Heart right ventricle (tissue), 16 donors: ENCODE measurements at regions of chrX and their contacts with region 1.

Region 1: DNA sequence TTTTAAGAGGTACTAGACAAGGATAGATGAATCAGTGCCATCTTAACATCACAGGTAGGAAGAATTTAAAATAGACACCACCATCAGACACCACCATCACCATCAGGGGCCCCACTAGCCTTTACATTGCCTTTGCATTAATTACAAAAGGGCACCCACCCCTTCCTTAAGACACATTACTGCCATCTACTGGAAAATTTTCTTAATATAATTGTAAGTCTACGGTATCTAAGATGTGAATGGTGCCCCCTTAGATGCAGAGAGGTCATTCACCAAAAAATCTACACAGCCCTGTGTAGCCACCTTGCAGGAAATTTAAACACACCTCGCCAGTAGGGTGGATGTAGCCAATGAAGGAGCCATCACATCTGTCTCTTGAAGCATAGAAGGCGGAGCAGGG is 184.1 kb downstream of the MID1IP1 start:
- DNase-seq: no peak
- ATAC-seq: peak in 1 of 8 donors; percentile 20
- H3K4me3 ChIP-seq: no peak overlapping the region
- H3K27ac ChIP-seq: no peak overlapping the region
- H3K4me1 ChIP-seq: peaks cover 0 to 6% (median 0%) of the 10 kb centered on the region in 9 donors
- H3K27me3 ChIP-seq: peaks cover 0 to 11% (median 0%) of the 10 kb centered on the region in 7 donors
- CTCF ChIP-seq: peak in 8 of 9 donors; percentile 6 to 50 (median 33)

Region 2: DNA sequence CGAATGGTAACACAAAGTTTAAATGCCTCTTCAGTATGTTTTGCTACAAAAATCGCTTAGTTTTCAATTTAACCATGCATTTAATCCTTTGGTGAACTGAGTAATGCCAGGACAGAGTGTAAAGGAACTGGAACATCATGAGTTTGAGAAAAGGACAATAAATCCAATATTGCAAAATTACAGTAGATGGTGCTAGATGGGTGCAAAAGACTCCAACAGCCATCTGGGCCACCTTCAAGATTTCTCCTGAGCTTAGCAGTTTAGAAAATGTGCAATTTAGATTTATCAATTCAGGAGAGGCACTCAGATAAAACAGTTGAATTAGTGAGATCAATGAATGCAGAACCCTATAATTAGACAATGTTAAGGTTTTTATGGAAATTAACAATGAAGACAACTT is 217.3 kb before region 1 on chrX:
- intact Hi-C with region 1: loop called in 6 of 10 experiments (anchors 2 to 10 kb)
- DNase-seq: no peak
- ATAC-seq: peak in 1 of 8 donors; percentile 51
- H3K4me3 ChIP-seq: no peak overlapping the region
- H3K27ac ChIP-seq: no peak overlapping the region
- H3K4me1 ChIP-seq: no peaks in the 10 kb centered on the region
- H3K27me3 ChIP-seq: peaks cover 0 to 32% (median 0%) of the 10 kb centered on the region in 7 donors
- CTCF ChIP-seq: peak in 8 of 9 donors; percentile 15 to 59 (median 44)

Region 3: GRCh38 chrX:38774249-38774648 is 211.1 kb before region 1 on chrX:
- intact Hi-C with region 1: loop called in 5 of 10 experiments (anchors 5 to 10 kb)
- DNase-seq: no peak
- ATAC-seq: no peak
- H3K4me3 ChIP-seq: no peak overlapping the region
- H3K27ac ChIP-seq: no peak overlapping the region
- H3K4me1 ChIP-seq: no peaks in the 10 kb centered on the region
- H3K27me3 ChIP-seq: peaks cover 0 to 40% (median 0%) of the 10 kb centered on the region in 7 donors
- CTCF ChIP-seq: no peak

Region 4: DNA sequence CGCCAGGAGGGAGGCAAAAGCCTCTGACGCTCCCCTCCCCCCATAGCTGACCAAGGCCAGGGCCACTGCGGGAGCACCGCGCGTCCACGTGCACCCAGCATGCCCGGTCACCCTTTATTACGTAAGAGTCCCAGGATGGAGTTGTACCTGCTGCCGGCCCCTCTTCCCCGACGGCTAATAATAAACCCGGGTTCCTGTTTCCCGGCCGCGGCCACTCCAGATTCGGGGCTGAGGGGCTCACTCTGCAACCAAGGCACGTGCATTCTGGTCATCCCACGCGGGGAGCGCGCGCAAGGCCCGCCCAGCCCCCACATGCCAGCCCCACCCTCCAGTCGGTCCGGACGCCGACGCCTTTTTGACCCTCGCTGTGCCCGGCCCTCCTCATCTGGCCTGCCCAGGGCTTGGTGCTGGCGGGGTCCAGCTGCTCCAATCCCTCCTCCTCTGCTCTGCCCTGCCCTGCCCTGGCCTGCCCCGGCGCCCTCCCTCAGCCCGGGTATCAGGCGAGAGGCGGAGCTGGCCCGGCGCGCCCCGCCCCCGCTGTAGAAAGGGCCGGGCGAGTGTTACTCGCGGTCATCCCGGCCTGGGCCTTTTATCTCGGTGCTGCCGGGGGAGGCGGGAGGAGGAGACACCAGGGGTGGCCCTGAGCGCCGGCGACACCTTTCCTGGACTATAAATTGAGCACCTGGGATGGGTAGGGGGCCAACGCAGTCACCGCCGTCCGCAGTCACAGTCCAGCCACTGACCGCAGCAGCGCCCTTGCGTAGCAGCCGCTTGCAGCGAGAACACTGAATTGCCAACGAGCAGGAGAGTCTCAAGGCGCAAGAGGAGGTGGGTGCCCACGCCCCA is 181.6 kb before region 1 on chrX:
- intact Hi-C with region 1: loop called in 7 of 10 experiments (anchors 5 to 10 kb)
- DNase-seq: peak; percentile 77 to 86
- ATAC-seq: peak; percentile 81 to 94 (median 84)
- H3K4me3 ChIP-seq: peak overlapping the region; percentile 63 to 77 (median 70)
- H3K27ac ChIP-seq: peak overlapping the region; percentile 89 to 96 (median 95)
- H3K4me1 ChIP-seq: peaks cover 0 to 47% (median 26%) of the 10 kb centered on the region in 9 donors
- H3K27me3 ChIP-seq: no peaks in the 10 kb centered on the region
- CTCF ChIP-seq: no peak

Region 5: GRCh38 chrX:38929966-38930421 is 55.4 kb before region 1 on chrX:
- intact Hi-C with region 1: no loop called
- DNase-seq: no peak
- ATAC-seq: peak in 6 of 8 donors; percentile 20 to 86 (median 50)
- H3K4me3 ChIP-seq: no peak overlapping the region
- H3K27ac ChIP-seq: peak overlapping the region in 1 of 10 donors; percentile 20
- H3K4me1 ChIP-seq: peaks cover 0 to 3% (median 0%) of the 10 kb centered on the region in 9 donors
- H3K27me3 ChIP-seq: peaks cover 0 to 6% (median 0%) of the 10 kb centered on the region in 7 donors
- CTCF ChIP-seq: no peak

Region 6: GRCh38 chrX:39133971-39134370 is 148.6 kb after region 1 on chrX:
- intact Hi-C with region 1: loop called in 1 of 10 experiments (anchors 5 kb)
- DNase-seq: peak in 1 of 2 donors; percentile 9
- ATAC-seq: no peak
- H3K4me3 ChIP-seq: no peak overlapping the region
- H3K27ac ChIP-seq: no peak overlapping the region
- H3K4me1 ChIP-seq: no peaks in the 10 kb centered on the region
- H3K27me3 ChIP-seq: no peaks in the 10 kb centered on the region
- CTCF ChIP-seq: peak in 5 of 9 donors; percentile 8 to 25 (median 19)